ENCODE measurements at regions of chr13 and their contacts with region 1.

Region 1: GRCh38 chr13:95378603-95379002 is 77.4 kb upstream of the ABCC4 start:
- DNase-seq: no peak
- H3K4me3 ChIP-seq: no peak overlapping the region
- H3K27ac ChIP-seq: no peak overlapping the region
- H3K4me1 ChIP-seq: peaks cover 5 to 12% (median 10%) of the 10 kb centered on the region in 4 donors
- H3K27me3 ChIP-seq: no peaks in the 10 kb centered on the region
- CTCF ChIP-seq: no peak
- EP300 ChIP-seq: no peak
- POLR2A ChIP-seq: no peak

Region 2: GRCh38 chr13:95191821-95192563 is 186.6 kb before region 1 on chr13:
- intact Hi-C with region 1: loop called (anchors 5 kb)
- DNase-seq: peak; percentile 73 to 90
- H3K4me3 ChIP-seq: no peak overlapping the region
- H3K27ac ChIP-seq: no peak overlapping the region
- H3K4me1 ChIP-seq: peaks cover 0 to 4% (median 0%) of the 10 kb centered on the region in 4 donors
- H3K27me3 ChIP-seq: no peaks in the 10 kb centered on the region
- CTCF ChIP-seq: peak in 5 of 7 experiments; percentile 54 to 76 (median 75)
- EP300 ChIP-seq: no peak
- POLR2A ChIP-seq: no peak

Region 3: DNA sequence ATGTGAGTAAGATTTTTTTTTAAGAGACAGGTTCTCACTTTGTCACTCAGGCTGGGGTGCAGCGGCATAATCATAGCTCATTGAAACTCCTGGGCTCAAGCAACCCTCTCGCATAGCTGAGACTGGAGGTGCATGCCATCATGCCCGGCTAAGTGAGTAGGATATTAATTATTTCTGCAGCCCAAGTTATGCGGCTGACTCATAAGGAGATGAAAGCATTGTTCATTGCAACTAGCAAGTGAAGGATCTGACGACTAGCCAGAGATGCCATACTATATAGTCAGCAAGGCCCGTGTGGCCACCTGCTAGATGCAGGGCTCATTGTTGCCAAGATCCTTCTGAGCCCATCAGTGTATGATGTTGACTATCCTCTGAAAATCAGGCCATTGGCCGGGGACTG is 122.5 kb before region 1 on chr13:
- intact Hi-C with region 1: no loop called
- DNase-seq: no peak
- H3K4me3 ChIP-seq: no peak overlapping the region
- H3K27ac ChIP-seq: no peak overlapping the region
- H3K4me1 ChIP-seq: no peaks in the 10 kb centered on the region
- H3K27me3 ChIP-seq: no peaks in the 10 kb centered on the region
- CTCF ChIP-seq: no peak
- EP300 ChIP-seq: no peak
- POLR2A ChIP-seq: no peak

Region 4: GRCh38 chr13:95624020-95624419 is 245.4 kb after region 1 on chr13:
- intact Hi-C with region 1: no loop called
- DNase-seq: peak in 1 of 2 donors; percentile 85
- H3K4me3 ChIP-seq: no peak overlapping the region
- H3K27ac ChIP-seq: no peak overlapping the region
- H3K4me1 ChIP-seq: peaks cover 0 to 11% (median 9%) of the 10 kb centered on the region in 4 donors
- H3K27me3 ChIP-seq: no peaks in the 10 kb centered on the region
- CTCF ChIP-seq: peak in 5 of 7 experiments; percentile 22 to 67 (median 46)
- EP300 ChIP-seq: no peak
- POLR2A ChIP-seq: no peak